CD14-positive monocyte (primary cell): ENCODE measurements at regions of chr1 and their contacts with region 1.

Region 1: GRCh38 chr1:160681067-160681890 is 30.3 kb downstream of the CD48 start:
- DNase-seq: peak; percentile 76 to 90 (median 80)
- H3K4me3 ChIP-seq: no peak overlapping the region
- H3K4me3 Mint-ChIP-seq: no peak overlapping the region
- H3K27ac ChIP-seq: peak overlapping the region in 1 of 2 donors; percentile 33
- H3K27ac Mint-ChIP-seq: peak overlapping the region; percentile 43 to 91 (median 63)
- H3K4me1 ChIP-seq: peaks cover 47 to 49% of the 10 kb centered on the region in 2 donors
- H3K4me1 Mint-ChIP-seq: peaks cover 51% of the 10 kb centered on the region
- H3K27me3 ChIP-seq: no peaks in the 10 kb centered on the region
- H3K27me3 Mint-ChIP-seq: no peaks in the 10 kb centered on the region
- CTCF ChIP-seq: peak; percentile 94

Region 2: GRCh38 chr1:160726498-160727315 is 45.4 kb after region 1 on chr1:
- intact Hi-C with region 1: loop called in 1 of 2 experiments (anchors 5 kb)
- DNase-seq: peak; percentile 71 to 84 (median 83)
- H3K4me3 ChIP-seq: peak overlapping the region in 2 of 3 experiments; percentile 0 to 60
- H3K4me3 Mint-ChIP-seq: no peak overlapping the region
- H3K27ac ChIP-seq: peak overlapping the region in 1 of 2 donors; percentile 65
- H3K27ac Mint-ChIP-seq: no peak overlapping the region
- H3K4me1 ChIP-seq: peaks cover 44 to 53% of the 10 kb centered on the region in 2 donors
- H3K4me1 Mint-ChIP-seq: peaks cover 24% of the 10 kb centered on the region
- H3K27me3 ChIP-seq: no peaks in the 10 kb centered on the region
- H3K27me3 Mint-ChIP-seq: no peaks in the 10 kb centered on the region
- CTCF ChIP-seq: peak; percentile 97

Region 3: DNA sequence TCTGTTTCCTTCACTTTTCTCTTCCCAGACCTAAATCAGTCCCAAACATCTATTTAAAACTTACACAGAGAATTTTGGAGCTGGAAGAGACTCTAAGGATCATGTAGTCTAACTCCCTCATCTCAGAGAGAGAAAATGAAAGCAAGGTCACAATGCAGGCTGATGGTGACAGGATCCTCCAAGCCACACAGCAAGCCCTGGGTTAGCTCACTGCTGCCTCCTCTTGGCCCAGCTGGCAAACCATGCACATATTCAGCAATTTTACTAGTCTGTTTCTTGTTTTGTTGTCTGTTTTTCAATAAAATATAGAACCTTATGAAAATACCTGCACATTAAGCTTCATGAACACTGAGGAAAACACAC is 87.0 kb after region 1 on chr1:
- intact Hi-C with region 1: loop called (anchors 1 to 5 kb)
- DNase-seq: peak; percentile 76 to 84 (median 79)
- H3K4me3 ChIP-seq: peak overlapping the region in 1 of 3 experiments; percentile 48
- H3K4me3 Mint-ChIP-seq: peak overlapping the region; percentile 28 to 69
- H3K27ac ChIP-seq: peak overlapping the region; percentile 7 to 75
- H3K27ac Mint-ChIP-seq: peak overlapping the region; percentile 62 to 84 (median 79)
- H3K4me1 ChIP-seq: peaks cover 18 to 24% of the 10 kb centered on the region in 2 donors
- H3K4me1 Mint-ChIP-seq: peaks cover 19% of the 10 kb centered on the region
- H3K27me3 ChIP-seq: no peaks in the 10 kb centered on the region
- H3K27me3 Mint-ChIP-seq: no peaks in the 10 kb centered on the region
- CTCF ChIP-seq: peak; percentile 83

Region 4: DNA sequence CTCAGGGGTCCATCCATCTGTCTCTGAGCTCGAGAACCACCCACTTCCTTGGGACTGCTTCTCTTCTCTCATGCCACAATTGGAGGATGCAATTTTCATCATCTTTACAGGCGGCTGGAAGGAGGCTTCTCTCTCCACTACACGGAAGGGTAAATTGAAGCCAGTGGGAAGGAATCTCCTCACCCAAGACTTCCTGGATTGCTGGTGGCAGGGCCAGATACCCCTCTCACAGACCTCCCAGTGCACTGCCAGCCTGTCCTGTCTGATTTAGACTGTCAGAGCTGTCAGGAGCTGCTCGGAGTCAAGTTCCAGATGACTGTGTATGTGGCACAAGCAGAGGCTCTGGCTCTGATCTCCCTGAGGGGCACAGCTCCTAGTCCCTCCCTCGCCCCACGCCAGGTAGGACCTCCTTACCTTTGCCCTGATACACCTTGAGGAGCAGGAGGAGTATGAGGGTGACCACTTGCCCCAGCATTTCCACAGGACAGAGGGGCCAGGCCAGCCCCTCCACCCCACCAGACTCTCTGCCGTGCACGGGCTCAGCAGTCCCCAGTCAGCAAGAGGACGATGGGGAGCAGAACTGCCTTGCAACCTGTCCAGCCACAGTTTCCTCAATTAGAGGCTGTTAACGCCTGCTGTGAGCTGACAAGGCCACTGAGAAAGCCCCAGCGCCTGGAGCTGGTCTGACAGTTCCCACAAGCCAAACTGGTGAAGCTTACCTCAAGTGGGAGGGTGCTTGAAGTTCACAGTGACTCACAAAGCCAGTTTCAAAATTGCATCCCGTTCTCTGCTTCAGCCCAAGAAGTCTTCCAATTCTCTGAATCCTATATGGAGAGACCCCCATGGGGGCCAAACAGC is 181.2 kb after region 1 on chr1 and contains the start of gene CD244:
- intact Hi-C with region 1: loop called in 1 of 2 experiments (anchors 10 kb)
- DNase-seq: peak; percentile 88 to 97 (median 94)
- H3K4me3 ChIP-seq: peak within 1 kb of the TSS; percentile 56 to 78 (median 58)
- H3K4me3 Mint-ChIP-seq: peak within 1 kb of the TSS; percentile 84 to 99
- H3K27ac ChIP-seq: peak within 1 kb of the TSS; percentile 95 to 98
- H3K27ac Mint-ChIP-seq: peak within 1 kb of the TSS; percentile 92 to 99 (median 98)
- H3K4me1 ChIP-seq: peaks cover 85 to 89% of the 10 kb centered on the region in 2 donors
- H3K4me1 Mint-ChIP-seq: peaks cover 88% of the 10 kb centered on the region
- H3K27me3 ChIP-seq: no peaks in the 10 kb centered on the region
- H3K27me3 Mint-ChIP-seq: peaks cover 0 to 3% (median 0%) of the 10 kb centered on the region in 3 donors
- CTCF ChIP-seq: no peak
- polyA plus RNA-seq, gene CD244: 62.2 to 116 (median 106) TPM